Right lobe of liver (tissue), 6 donors: ENCODE measurements at regions of chr10 and their contacts with region 1.

Region 1: GRCh38 chr10:43671656-43672531 is 23.2 kb upstream of the ZNF32 start:
- DNase-seq: peak in 2 of 3 donors; percentile 45 to 69
- ATAC-seq: peak; percentile 88 to 97 (median 94)
- H3K4me3 ChIP-seq: no peak overlapping the region
- H3K27ac ChIP-seq: no peak overlapping the region
- H3K4me1 ChIP-seq: no peaks in the 10 kb centered on the region
- H3K27me3 ChIP-seq: no peaks in the 10 kb centered on the region
- CTCF ChIP-seq: peak; percentile 72 to 91 (median 78)
- POLR2A ChIP-seq: no peak

Region 2: DNA sequence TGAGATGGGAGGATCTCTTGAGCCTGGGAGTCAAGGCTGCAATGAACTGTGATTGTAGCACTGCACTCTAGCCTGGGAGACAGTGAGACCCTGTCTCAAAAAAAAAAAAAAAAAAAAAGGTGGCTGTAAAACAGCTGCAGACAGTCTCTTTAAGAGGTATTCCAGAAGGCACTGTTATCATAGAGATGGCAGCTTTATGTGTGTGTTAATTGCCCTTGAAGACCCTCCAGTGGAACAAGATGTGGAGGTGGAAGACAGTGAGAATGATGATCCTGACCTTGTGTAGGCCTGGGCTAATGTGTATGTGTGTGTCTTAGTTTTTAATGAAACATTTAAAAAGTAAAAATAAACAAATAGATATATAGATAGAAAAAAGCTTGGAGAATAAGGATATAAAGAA is 169.0 kb before region 1 on chr10:
- intact Hi-C with region 1: no loop called
- DNase-seq: no peak
- ATAC-seq: no peak
- H3K4me3 ChIP-seq: no peak overlapping the region
- H3K27ac ChIP-seq: no peak overlapping the region
- H3K4me1 ChIP-seq: no peaks in the 10 kb centered on the region
- H3K27me3 ChIP-seq: no peaks in the 10 kb centered on the region
- CTCF ChIP-seq: no peak
- POLR2A ChIP-seq: no peak

Region 3: DNA sequence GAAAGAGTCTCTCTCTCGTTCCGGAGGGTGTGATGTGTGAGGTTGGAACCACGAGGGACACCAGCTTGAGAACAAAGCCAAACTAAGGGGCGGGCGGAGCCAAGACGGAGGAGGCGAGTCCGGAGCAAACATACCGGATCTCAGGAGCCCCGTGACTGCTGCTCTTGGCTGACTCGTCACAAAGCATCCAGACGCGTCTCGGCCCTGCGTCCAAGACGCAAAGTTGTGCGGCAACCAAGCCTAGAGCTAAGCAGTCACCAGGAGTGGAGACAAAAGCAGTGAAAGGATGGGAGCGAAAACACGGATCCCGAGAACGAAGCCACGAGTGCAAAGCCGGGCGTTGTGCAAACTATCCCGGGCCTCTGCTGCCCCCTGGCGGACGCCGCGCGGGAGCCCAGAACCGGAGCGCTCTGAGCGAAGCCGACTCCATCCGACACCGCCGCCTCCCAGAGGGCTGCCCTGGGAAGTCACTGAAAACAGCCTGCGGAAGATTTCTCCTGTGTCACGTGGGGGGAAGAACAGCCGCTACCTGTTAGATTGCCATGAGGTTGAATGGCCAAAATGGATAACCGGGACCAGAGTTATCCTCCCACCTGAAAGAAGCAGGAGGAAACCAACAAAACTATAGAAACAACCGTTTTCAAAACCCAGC is 1192.9 kb after region 1 on chr10:
- intact Hi-C with region 1: loop called (anchors 5 to 10 kb)
- DNase-seq: peak; percentile 91 to 92 (median 91)
- ATAC-seq: peak; percentile 98 to 99 (median 98)
- H3K4me3 ChIP-seq: peak overlapping the region; percentile 27 to 55 (median 43)
- H3K27ac ChIP-seq: peak overlapping the region in 1 of 3 donors; percentile 27
- H3K4me1 ChIP-seq: peaks cover 0 to 26% (median 0%) of the 10 kb centered on the region in 4 donors
- H3K27me3 ChIP-seq: no peaks in the 10 kb centered on the region
- CTCF ChIP-seq: peak; percentile 94 to 98 (median 96)
- POLR2A ChIP-seq: no peak